CD4-positive, alpha-beta T cell (primary cell): ENCODE measurements at regions of chr11 and their contacts with region 1.

Region 1: GRCh38 chr11:65888163-65888814 is at the start of gene FIBP:
- DNase-seq: peak; percentile 92 to 98 (median 95)
- ATAC-seq: peak; percentile 60
- H3K4me3 ChIP-seq: peak within 1 kb of the TSS; percentile 93
- H3K4me3 Mint-ChIP-seq: peak within 1 kb of the TSS; percentile 87
- H3K27ac ChIP-seq: peak within 1 kb of the TSS; percentile 88 to 91
- H3K27ac Mint-ChIP-seq: peak within 1 kb of the TSS; percentile 95
- H3K4me1 ChIP-seq: peaks cover 68% of the 10 kb centered on the region
- H3K4me1 Mint-ChIP-seq: peaks cover 63% of the 10 kb centered on the region
- H3K27me3 ChIP-seq: no peaks in the 10 kb centered on the region
- H3K27me3 Mint-ChIP-seq: no peaks in the 10 kb centered on the region
- CTCF ChIP-seq: peak; percentile 95
- total RNA-seq, gene FIBP: 19.1 to 19.9 TPM

Region 2: DNA sequence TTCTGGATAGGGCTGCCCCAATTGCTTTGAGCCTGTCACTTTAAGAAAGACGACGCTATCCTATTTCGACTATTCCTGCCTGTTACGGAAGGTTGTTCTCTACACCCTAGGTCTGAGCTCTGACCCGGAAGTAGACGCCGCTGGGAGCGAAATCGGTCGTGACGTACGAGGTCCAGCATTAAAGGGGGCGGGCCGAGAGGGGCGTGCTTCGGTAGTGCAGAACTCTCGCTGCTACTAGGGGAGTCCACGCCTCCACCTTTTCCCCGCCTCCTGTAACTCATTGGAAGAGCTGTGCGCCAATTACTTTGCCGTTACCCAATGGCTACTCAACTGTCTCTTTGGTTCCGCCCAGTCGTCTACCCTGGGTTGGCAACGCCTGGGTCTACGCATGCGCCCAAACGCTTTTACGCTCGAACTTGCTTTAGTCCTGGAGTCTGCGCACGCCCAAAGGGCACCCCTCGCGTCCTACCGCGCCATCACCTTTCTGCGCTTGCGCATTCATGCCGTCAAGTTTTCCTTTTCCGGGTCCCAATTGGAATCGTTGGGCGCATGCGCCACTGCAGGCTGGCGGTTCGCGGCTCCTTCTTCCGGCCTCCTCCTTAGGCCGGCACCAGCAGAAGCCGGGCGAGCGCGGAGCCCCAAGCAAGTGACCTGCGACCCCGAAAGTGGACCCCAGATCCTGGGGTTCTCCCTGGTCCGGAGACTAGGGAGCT is 272.9 kb before region 1 on chr11 and contains the start of gene PCNX3:
- CTCF ChIA-PET with region 1: interaction called, 7 read pairs
- POLR2A ChIA-PET with region 1: interaction called, 23 read pairs
- intact Hi-C with region 1: no loop called
- DNase-seq: peak; percentile 99 to 100 (median 100)
- ATAC-seq: peak; percentile 87
- H3K4me3 ChIP-seq: peak within 1 kb of the TSS; percentile 93
- H3K4me3 Mint-ChIP-seq: peak within 1 kb of the TSS; percentile 98
- H3K27ac ChIP-seq: peak within 1 kb of the TSS; percentile 94
- H3K27ac Mint-ChIP-seq: peak within 1 kb of the TSS; percentile 93
- H3K4me1 ChIP-seq: peaks cover 67% of the 10 kb centered on the region
- H3K4me1 Mint-ChIP-seq: peaks cover 46% of the 10 kb centered on the region
- H3K27me3 ChIP-seq: no peaks in the 10 kb centered on the region
- H3K27me3 Mint-ChIP-seq: no peaks in the 10 kb centered on the region
- CTCF ChIP-seq: no peak
- total RNA-seq, gene PCNX3: 37.3 to 40.5 TPM

Region 3: DNA sequence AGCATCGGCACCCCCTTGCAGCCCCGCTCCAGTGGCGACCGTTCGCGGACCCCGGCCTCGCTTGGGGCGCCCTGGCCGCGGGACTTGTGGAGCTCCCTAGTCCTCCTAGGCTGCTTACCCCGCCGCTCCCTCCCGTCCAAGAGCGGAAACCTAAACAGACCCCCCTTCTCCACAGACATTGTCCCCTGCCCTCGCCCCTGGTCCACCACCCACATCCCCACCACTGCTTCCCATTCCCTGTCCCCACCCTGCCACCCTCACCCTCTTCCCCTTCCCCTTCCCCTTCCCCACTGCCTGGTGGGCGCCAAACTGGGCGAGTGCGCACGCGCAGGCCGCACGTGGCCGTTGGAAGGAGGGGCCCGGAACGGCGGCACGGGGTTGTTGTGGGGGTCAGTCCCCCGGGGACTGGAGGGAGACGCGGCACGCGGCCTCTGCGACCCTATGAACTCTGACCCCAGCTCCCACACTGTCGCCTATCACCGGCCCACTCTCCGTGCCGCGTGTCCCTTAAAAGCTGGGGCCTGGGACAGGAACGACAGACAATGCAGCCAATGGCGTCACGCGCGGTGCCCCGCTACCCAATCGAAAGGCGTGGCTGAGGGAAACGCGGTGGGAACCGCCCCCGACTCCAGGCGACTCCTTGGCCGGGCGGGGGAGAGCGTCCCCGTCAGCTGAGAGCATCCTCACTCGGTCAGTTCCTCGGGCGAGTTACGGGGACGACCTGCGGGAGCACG is 54.8 kb before region 1 on chr11 and contains the start of gene SNX32:
- CTCF ChIA-PET with region 1: interaction called, 4 read pairs
- POLR2A ChIA-PET with region 1: interaction called, 16 read pairs
- intact Hi-C with region 1: no loop called
- DNase-seq: peak; percentile 88 to 97 (median 93)
- ATAC-seq: peak; percentile 100
- H3K4me3 ChIP-seq: peak within 1 kb of the TSS; percentile 76
- H3K4me3 Mint-ChIP-seq: no peak within 1 kb of the TSS
- H3K27ac ChIP-seq: peak within 1 kb of the TSS; percentile 18 to 31
- H3K27ac Mint-ChIP-seq: no peak within 1 kb of the TSS
- H3K4me1 ChIP-seq: peaks cover 24% of the 10 kb centered on the region
- H3K4me1 Mint-ChIP-seq: peaks cover 6% of the 10 kb centered on the region
- H3K27me3 ChIP-seq: no peaks in the 10 kb centered on the region
- H3K27me3 Mint-ChIP-seq: no peaks in the 10 kb centered on the region
- CTCF ChIP-seq: no peak
- total RNA-seq, gene SNX32: 0.33 to 0.61 TPM

Region 4: DNA sequence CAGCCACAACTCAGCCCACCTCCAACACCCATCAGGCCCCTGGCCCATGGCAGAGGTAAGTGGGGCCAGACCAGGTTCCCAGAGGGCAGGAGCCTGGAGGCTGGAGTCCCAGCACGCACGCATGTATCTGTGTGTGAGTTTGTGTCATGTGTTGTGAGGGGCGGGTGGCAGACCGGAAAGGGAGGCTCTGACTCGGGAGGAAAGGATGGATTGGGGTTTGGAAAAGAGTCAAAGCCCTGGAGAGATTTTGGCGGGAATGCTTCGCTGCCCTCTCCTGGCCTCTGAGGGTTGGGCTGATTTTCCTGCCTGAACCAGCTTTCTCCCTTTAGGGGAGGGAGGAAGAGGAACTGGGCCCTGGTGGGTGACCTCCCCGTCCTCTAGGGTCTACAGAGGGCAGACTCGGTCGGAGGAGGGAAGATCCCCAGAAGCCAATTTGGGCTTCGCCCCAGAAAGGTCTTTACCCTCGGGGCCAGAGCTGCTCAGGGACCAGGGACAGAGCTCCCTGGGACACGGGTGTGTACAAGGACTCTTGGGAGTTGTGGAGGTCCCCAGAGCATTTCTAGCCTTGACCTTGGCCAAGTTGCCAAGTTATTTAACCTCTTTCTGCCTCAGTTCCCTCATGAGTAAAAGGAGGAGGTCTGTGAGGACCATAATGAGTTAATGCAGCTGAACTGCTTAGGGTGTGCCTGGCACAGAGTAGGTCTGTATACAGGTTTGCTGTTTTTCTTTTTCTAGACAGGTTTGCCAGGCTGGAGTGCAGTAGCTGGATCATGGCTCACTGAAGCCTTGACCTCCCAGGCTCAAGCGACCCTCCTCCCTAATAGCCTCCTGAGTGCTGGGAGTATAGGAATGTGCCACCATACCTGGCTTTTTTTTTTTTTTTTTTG is 23.6 kb after region 1 on chr11:
- CTCF ChIA-PET with region 1: interaction called, 7 read pairs
- POLR2A ChIA-PET with region 1: interaction called, 104 read pairs
- intact Hi-C with region 1: no loop called
- DNase-seq: no peak
- ATAC-seq: no peak
- H3K4me3 ChIP-seq: no peak overlapping the region
- H3K4me3 Mint-ChIP-seq: no peak overlapping the region
- H3K27ac ChIP-seq: no peak overlapping the region
- H3K27ac Mint-ChIP-seq: no peak overlapping the region
- H3K4me1 ChIP-seq: peaks cover 19% of the 10 kb centered on the region
- H3K4me1 Mint-ChIP-seq: peaks cover 26% of the 10 kb centered on the region
- H3K27me3 ChIP-seq: no peaks in the 10 kb centered on the region
- H3K27me3 Mint-ChIP-seq: peaks cover 8% of the 10 kb centered on the region
- CTCF ChIP-seq: no peak

Region 5: GRCh38 chr11:65961232-65961901 is 73.1 kb after region 1 on chr11 and contains the start of gene SART1:
- CTCF ChIA-PET with region 1: interaction called, 9 read pairs
- POLR2A ChIA-PET with region 1: interaction called, 44 read pairs
- intact Hi-C with region 1: loop called (anchors 1 kb)
- DNase-seq: peak; percentile 89 to 99 (median 94)
- ATAC-seq: peak; percentile 90
- H3K4me3 ChIP-seq: peak within 1 kb of the TSS; percentile 92
- H3K4me3 Mint-ChIP-seq: peak within 1 kb of the TSS; percentile 99
- H3K27ac ChIP-seq: peak within 1 kb of the TSS; percentile 93 to 95
- H3K27ac Mint-ChIP-seq: peak within 1 kb of the TSS; percentile 96
- H3K4me1 ChIP-seq: peaks cover 54% of the 10 kb centered on the region
- H3K4me1 Mint-ChIP-seq: peaks cover 55% of the 10 kb centered on the region
- H3K27me3 ChIP-seq: no peaks in the 10 kb centered on the region
- H3K27me3 Mint-ChIP-seq: no peaks in the 10 kb centered on the region
- CTCF ChIP-seq: no peak
- total RNA-seq, gene SART1: 78.6 to 80.2 TPM

Region 6: GRCh38 chr11:66051766-66052663 is 163.7 kb after region 1 on chr11 and contains the start of gene SF3B2:
- CTCF ChIA-PET with region 1: interaction called, 5 read pairs
- POLR2A ChIA-PET with region 1: interaction called, 10 read pairs
- intact Hi-C with region 1: no loop called
- DNase-seq: peak; percentile 88 to 99 (median 94)
- ATAC-seq: peak; percentile 95
- H3K4me3 ChIP-seq: peak within 1 kb of the TSS; percentile 100
- H3K4me3 Mint-ChIP-seq: peak within 1 kb of the TSS; percentile 100
- H3K27ac ChIP-seq: peak within 1 kb of the TSS; percentile 66 to 90
- H3K27ac Mint-ChIP-seq: peak within 1 kb of the TSS; percentile 97
- H3K4me1 ChIP-seq: peaks cover 43% of the 10 kb centered on the region
- H3K4me1 Mint-ChIP-seq: peaks cover 37% of the 10 kb centered on the region
- H3K27me3 ChIP-seq: no peaks in the 10 kb centered on the region
- H3K27me3 Mint-ChIP-seq: peaks cover 5% of the 10 kb centered on the region
- CTCF ChIP-seq: no peak
- total RNA-seq, gene SF3B2: 182 to 196 TPM